Naive thymus-derived CD8-positive, alpha-beta T cell (primary cell): ENCODE measurements at regions of chr2 and their contacts with region 1.

Region 1: GRCh38 chr2:177263451-177264208 is 897 bp downstream of the NFE2L2 start:
- DNase-seq: peak; percentile 86 to 98 (median 94)
- ATAC-seq: peak; percentile 68 to 69
- H3K4me3 Mint-ChIP-seq: peak overlapping the region; percentile 90 to 99 (median 96)
- H3K27ac Mint-ChIP-seq: peak overlapping the region; percentile 89 to 100 (median 96)
- H3K4me1 Mint-ChIP-seq: peaks cover 16 to 61% (median 52%) of the 10 kb centered on the region in 4 donors
- H3K27me3 Mint-ChIP-seq: no peaks in the 10 kb centered on the region

Region 2: DNA sequence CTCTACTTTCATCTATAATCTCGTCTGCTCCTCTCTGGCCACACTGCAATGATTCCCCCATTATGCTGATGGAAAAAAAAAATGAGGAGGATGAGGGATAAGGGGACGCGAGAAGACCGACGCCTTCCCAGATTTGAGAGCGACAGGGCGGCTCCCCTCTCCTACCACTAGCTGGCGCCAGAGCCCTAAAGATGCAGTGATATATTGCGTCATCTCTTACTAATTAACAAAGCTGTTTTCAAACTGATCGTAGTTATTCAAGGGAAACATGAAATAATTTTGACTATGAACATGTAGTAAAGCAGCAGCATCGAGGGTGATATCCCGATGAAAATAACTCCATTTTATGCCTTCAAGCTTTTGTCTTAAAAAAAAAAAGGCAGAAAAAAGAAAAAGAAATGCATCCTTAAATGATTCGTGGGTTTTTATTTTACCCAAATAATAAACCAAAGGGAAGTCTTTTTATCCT is 99.0 kb before region 1 on chr2:
- POLR2A ChIA-PET with region 1: interaction called, 124 read pairs
- DNase-seq: peak; percentile 65 to 89 (median 76)
- ATAC-seq: peak; percentile 80 to 81
- H3K4me3 Mint-ChIP-seq: no peak overlapping the region
- H3K27ac Mint-ChIP-seq: no peak overlapping the region
- H3K4me1 Mint-ChIP-seq: peaks cover 7 to 18% (median 15%) of the 10 kb centered on the region in 4 donors
- H3K27me3 Mint-ChIP-seq: peaks cover 0 to 4% (median 2%) of the 10 kb centered on the region in 5 donors

Region 3: GRCh38 chr2:177221534-177221933 is 42.1 kb before region 1 on chr2:
- POLR2A ChIA-PET with region 1: interaction called, 47 read pairs
- DNase-seq: no peak
- ATAC-seq: no peak
- H3K4me3 Mint-ChIP-seq: no peak overlapping the region
- H3K27ac Mint-ChIP-seq: peak overlapping the region in 4 of 10 donors; percentile 16 to 60 (median 28)
- H3K4me1 Mint-ChIP-seq: peaks cover 17 to 53% (median 46%) of the 10 kb centered on the region in 4 donors
- H3K27me3 Mint-ChIP-seq: no peaks in the 10 kb centered on the region

Region 4: GRCh38 chr2:177239932-177240630 is 23.5 kb before region 1 on chr2:
- POLR2A ChIA-PET with region 1: interaction called, 33 read pairs
- DNase-seq: peak in 3 of 10 donors; percentile 27 to 39 (median 36)
- ATAC-seq: peak; percentile 65 to 75
- H3K4me3 Mint-ChIP-seq: peak overlapping the region; percentile 1 to 84 (median 62)
- H3K27ac Mint-ChIP-seq: peak overlapping the region; percentile 8 to 94 (median 83)
- H3K4me1 Mint-ChIP-seq: peaks cover 36 to 86% (median 85%) of the 10 kb centered on the region in 4 donors
- H3K27me3 Mint-ChIP-seq: no peaks in the 10 kb centered on the region

Region 5: DNA sequence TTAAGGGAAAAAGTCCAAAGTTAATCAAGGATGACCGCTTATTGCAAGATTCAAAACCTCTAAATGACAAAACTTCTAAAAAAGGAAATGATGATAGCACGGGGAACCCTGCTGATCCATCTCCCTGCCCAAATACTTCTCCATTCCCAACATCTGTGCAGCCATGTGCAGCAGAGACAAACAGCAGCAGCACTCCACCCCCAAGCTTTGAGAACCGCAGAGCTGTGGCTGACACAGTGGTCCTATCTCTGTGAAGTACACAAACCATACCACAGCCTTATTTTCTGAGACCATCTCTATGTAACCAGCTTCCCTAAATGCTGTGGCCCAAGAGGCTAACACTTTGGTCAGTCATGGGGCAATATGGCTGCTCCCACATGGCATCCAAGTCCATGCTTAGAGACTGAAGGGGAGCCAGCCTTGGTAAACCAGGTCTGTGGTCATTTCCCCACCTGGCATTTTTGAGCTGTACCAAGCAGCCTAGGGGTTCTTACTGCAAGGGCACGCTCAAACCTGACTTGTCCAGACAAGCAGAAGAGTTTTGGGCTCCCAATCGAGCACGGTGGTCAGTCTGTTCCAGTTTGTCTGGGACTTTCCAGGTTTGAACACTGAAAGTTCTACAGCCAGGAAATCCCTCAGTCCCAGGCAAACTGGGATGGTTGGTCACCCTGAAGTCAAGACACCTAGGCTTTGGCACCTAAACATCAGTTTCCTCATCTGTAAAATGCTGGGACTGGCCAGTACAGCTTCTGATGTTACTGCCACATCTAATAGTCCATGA is 18.0 kb after region 1 on chr2:
- POLR2A ChIA-PET with region 1: interaction called, 24 read pairs
- DNase-seq: no peak
- ATAC-seq: no peak
- H3K4me3 Mint-ChIP-seq: no peak overlapping the region
- H3K27ac Mint-ChIP-seq: peak overlapping the region in 1 of 10 donors; percentile 6
- H3K4me1 Mint-ChIP-seq: peaks cover 4 to 20% (median 10%) of the 10 kb centered on the region in 4 donors
- H3K27me3 Mint-ChIP-seq: no peaks in the 10 kb centered on the region

Region 6: GRCh38 chr2:177296040-177296439 is 32.4 kb after region 1 on chr2:
- POLR2A ChIA-PET with region 1: interaction called, 123 read pairs
- DNase-seq: peak in 3 of 10 donors; percentile 35 to 44 (median 44)
- ATAC-seq: peak; percentile 69 to 77
- H3K4me3 Mint-ChIP-seq: no peak overlapping the region
- H3K27ac Mint-ChIP-seq: peak overlapping the region in 3 of 10 donors; percentile 4 to 33 (median 14)
- H3K4me1 Mint-ChIP-seq: peaks cover 5 to 15% (median 10%) of the 10 kb centered on the region in 4 donors
- H3K27me3 Mint-ChIP-seq: no peaks in the 10 kb centered on the region

Region 7: DNA sequence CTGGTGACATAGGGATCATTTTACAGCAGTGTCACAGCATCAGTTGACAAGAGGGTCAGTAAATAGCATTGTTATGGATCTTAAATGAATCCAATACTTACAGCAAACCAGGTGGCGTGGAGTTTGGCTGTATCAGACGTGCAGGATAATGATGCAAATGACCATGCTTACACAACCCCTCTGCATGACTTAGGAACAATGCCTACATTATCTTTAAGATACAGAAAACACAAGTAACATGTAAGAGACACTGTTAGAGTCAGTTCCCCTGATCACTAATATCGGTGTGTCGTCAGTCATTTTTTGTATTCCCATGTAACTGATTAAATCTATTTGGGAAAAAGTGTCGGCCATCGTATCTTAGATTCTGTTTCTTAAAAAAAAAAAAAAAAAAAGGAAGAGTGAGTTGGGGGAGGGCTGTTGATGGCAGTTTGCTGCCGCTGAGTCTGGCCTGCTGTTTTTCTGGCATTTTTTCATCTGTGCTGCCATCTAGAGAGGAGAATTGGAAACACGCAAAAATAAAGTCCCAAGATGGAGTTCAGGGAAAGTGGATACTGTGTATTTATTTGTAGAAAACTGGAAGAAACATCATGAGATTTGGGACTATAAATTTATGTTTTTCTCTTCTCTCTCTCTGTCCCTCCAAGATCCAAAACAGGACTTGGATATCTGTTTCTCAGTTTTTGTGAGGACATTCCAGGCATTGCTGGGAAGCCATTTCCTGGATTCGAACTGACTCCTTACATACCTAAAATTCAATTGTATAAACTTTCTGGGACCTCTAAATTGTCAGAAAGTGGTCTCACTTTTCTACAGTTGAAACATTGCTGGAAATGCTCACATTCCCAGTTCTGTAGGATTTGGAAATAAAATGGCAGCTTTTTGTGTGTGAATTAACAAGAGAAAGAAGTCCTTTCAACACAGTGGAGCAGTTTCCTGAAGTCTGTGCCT is 68.7 kb after region 1 on chr2:
- POLR2A ChIA-PET with region 1: interaction called, 41 read pairs
- DNase-seq: peak in 9 of 10 donors; percentile 22 to 76 (median 52)
- ATAC-seq: peak; percentile 92 to 93
- H3K4me3 Mint-ChIP-seq: peak overlapping the region in 4 of 10 donors; percentile 1 to 43 (median 10)
- H3K27ac Mint-ChIP-seq: peak overlapping the region in 3 of 10 donors; percentile 3 to 8 (median 4)
- H3K4me1 Mint-ChIP-seq: peaks cover 7 to 21% (median 12%) of the 10 kb centered on the region in 4 donors
- H3K27me3 Mint-ChIP-seq: no peaks in the 10 kb centered on the region